Panc1 (cell line): ENCODE measurements at regions of chr1 and their contacts with region 1.

Region 1: DNA sequence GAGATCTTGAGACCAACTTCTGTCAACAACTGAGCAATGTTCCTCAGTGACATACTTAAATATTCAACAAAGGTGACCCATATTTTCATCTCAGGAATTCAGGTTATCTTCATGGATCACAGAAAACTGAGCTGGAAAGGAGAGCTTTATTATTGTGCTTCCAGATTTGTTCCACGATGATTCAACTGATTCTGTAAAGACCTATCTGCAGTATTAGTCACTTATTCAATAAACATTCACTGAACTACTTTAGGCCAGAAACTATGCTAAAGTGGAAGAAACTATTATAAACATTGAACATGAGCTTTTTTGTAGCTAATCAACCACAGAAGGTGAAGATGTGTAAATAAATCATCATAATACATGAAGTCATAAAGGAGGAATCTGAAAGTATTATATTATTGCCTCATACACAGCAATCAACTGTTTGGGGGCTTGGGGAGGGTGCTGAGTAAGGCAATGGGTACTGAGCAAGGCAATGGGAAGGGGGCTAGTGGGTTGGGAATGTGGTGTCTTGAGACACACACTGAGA is 30.7 kb upstream of the EXO1 start:
- DNase-seq: no peak
- ATAC-seq: no peak
- H3K4me3 ChIP-seq: no peak overlapping the region
- H3K27ac ChIP-seq: no peak overlapping the region
- H3K4me1 ChIP-seq: 0 out of 2 replicates have a peak, but pooled peaks cover 4% of the 10 kb centered on the region
- H3K27me3 ChIP-seq: no peaks in the 10 kb centered on the region
- CTCF ChIP-seq: no peak

Region 2: DNA sequence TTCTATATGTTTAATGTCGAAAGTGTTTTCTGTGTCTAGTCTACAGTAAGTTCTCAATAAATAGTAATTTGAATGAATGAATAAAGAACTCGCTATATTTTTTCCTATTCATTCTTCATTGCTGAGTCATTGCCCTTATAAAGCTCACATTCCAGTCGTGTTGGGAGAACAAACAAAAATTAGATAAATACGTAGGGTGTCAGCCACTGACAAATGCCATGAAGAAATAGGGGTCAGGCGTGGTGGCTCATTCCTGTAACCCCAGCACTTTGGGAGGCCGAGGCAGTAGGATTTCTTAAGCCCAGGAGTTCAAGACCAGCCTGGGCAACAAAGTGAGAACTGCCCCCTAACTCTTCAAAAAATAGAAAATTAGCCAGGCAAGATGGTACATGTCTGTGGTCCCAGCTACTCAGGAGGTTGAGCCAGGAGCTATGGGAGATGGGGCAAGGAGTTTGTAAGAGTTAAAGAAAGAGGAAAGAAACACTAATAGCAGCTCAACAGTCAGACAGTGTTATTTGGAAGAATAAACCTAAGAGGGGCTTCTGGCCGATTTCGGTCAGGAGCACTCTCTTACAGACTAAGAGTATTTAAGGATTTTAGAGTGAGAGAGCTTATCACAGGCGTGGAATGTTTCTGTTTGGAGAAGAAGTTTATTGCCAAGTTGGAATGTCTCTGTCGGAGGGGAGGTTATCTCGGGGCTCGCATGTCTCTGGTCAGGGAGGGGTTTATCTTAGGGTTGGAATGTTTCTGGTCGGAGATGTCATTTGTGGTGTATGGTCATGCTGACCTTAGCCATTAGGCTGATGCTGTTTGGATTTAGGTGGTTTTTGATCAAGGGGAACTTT is 175.4 kb before region 1 on chr1:
- CTCF ChIA-PET with region 1: interaction called, 10 read pairs
- POLR2A ChIA-PET with region 1: no interaction called
- in situ Hi-C with region 1: no loop called
- intact Hi-C with region 1: no loop called
- DNase-seq: no peak
- ATAC-seq: no peak
- H3K4me3 ChIP-seq: no peak overlapping the region
- H3K27ac ChIP-seq: no peak overlapping the region
- H3K4me1 ChIP-seq: peaks cover 10% of the 10 kb centered on the region; the same call in 1 of the 2 replicates
- H3K27me3 ChIP-seq: no peaks in the 10 kb centered on the region
- CTCF ChIP-seq: no peak

Region 3: DNA sequence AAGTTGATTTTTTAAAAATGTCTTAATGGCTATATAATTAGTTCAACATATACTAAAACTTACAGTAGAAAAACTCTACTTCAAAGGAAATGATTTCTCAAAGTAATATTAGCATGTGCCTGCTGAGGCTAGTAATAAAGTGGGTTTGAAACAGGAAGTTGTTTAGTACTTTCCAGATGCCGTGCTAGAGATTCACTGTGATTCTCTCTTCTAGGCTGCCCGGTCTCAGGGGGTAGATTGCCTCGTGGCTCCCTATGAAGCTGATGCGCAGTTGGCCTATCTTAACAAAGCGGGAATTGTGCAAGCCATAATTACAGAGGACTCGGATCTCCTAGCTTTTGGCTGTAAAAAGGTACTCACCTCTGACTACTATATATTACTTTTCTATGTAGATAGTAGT is 39.8 kb after region 1 on chr1:
- CTCF ChIA-PET with region 1: no interaction called
- POLR2A ChIA-PET with region 1: interaction called, 11 read pairs
- in situ Hi-C with region 1: no loop called
- intact Hi-C with region 1: no loop called
- DNase-seq: no peak
- ATAC-seq: no peak
- H3K4me3 ChIP-seq: no peak overlapping the region
- H3K27ac ChIP-seq: no peak overlapping the region
- H3K4me1 ChIP-seq: no peaks in the 10 kb centered on the region
- H3K27me3 ChIP-seq: no peaks in the 10 kb centered on the region
- CTCF ChIP-seq: no peak

Region 4: DNA sequence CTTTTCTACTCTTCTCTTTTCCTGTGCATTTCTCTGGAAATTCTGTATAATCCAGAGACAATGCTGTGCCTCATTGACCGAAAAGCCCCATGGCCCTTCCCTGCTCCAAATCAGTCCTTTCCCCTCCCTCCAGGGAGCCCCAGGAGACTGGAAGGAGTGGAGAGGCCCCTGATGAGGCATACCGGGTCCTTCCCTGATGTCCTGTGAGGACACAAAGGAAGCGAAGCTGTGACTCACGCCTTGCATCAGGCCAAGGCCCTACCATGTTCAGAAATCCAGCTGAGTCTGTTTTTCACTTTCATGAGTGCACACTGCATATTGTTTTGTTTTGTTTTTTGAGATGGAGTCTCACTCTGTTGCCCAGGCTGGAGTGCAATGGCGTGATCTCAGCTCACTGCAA is 101.6 kb after region 1 on chr1:
- CTCF ChIA-PET with region 1: no interaction called
- POLR2A ChIA-PET with region 1: no interaction called
- in situ Hi-C with region 1: no loop called
- intact Hi-C with region 1: no loop called
- DNase-seq: no peak
- ATAC-seq: no peak
- H3K4me3 ChIP-seq: no peak overlapping the region
- H3K27ac ChIP-seq: no peak overlapping the region
- H3K4me1 ChIP-seq: no peaks in the 10 kb centered on the region
- H3K27me3 ChIP-seq: no peaks in the 10 kb centered on the region
- CTCF ChIP-seq: no peak